HepG2 (cell line): ENCODE measurements at regions of chr17 and their contacts with region 1.

Region 1: GRCh38 chr17:15966183-15966878 is 21.4 kb downstream of the ADORA2B start:
- DNase-seq: peak; percentile 90
- ATAC-seq: peak; percentile 97
- H3K4me3 ChIP-seq: peak overlapping the region; percentile 61 to 75 (median 61)
- H3K27ac ChIP-seq: peak overlapping the region; percentile 84
- H3K4me1 ChIP-seq: peaks cover 50% of the 10 kb centered on the region
- H3K27me3 ChIP-seq: no peaks in the 10 kb centered on the region
- CTCF ChIP-seq: no peak
- EP300 ChIP-seq: peak in 1 of 2 experiments; percentile 23; a peak in 1 of 4 replicates
- POLR2A ChIP-seq: peak; percentile 51 to 52; a peak in 3 of 4 replicates
- RAD21 ChIP-seq: no peak

Region 2: DNA sequence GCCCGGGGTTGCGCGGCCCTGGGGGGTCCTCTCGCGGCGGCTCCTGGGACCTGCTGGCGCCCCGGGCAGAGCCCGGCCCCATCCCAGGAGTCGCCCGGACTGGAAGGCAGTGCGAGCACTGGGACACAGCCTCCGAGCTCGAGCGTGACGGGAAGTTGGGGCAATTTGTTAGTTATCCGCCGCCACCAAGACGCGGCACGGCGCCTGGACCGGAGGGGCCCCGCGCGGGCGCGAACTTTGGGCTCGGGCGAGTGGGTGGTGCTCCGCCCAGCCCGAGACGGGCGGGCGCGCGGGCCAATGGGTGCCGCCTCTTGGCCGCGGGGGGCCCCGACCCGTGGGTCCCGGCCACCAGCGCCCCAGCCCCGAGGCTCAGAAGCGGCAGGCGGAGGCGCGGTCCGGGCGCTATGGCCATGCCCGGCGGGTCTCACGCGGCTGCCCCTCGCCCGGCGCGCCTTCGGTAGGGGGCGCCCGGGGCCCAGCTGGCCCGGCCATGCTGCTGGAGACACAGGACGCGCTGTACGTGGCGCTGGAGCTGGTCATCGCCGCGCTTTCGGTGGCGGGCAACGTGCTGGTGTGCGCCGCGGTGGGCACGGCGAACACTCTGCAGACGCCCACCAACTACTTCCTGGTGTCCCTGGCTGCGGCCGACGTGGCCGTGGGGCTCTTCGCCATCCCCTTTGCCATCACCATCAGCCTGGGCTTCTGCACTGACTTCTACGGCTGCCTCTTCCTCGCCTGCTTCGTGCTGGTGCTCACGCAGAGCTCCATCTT is 21.4 kb before region 1 on chr17 and contains the start of gene ADORA2B:
- CTCF ChIA-PET with region 1: no interaction called
- POLR2A ChIA-PET with region 1: interaction called, 12 read pairs
- in situ Hi-C with region 1: no loop called
- intact Hi-C with region 1: no loop called
- DNase-seq: peak; percentile 60
- ATAC-seq: peak; percentile 85
- H3K4me3 ChIP-seq: peak within 1 kb of the TSS; percentile 66 to 83 (median 79)
- H3K27ac ChIP-seq: peak within 1 kb of the TSS; percentile 45
- H3K4me1 ChIP-seq: peaks cover 46% of the 10 kb centered on the region
- H3K27me3 ChIP-seq: no peaks in the 10 kb centered on the region; a peak in 3 of 5 replicates
- CTCF ChIP-seq: peak; percentile 76
- EP300 ChIP-seq: no peak
- POLR2A ChIP-seq: peak; percentile 44 to 75
- RAD21 ChIP-seq: peak; percentile 82
- total RNA-seq, gene ADORA2B: 6.7 and 10.4 TPM in 2 replicates

Region 3: GRCh38 chr17:15981646-15982570 is 15.6 kb after region 1 on chr17:
- CTCF ChIA-PET with region 1: no interaction called
- POLR2A ChIA-PET with region 1: no interaction called
- in situ Hi-C with region 1: no loop called
- intact Hi-C with region 1: no loop called
- DNase-seq: no peak
- ATAC-seq: no peak
- H3K4me3 ChIP-seq: no peak overlapping the region
- H3K27ac ChIP-seq: peak overlapping the region; percentile 2
- H3K4me1 ChIP-seq: no peaks in the 10 kb centered on the region
- H3K27me3 ChIP-seq: no peaks in the 10 kb centered on the region
- CTCF ChIP-seq: no peak
- EP300 ChIP-seq: no peak
- POLR2A ChIP-seq: no peak
- RAD21 ChIP-seq: no peak